IMR-90 (cell line): ENCODE measurements at regions of chr11 and their contacts with region 1.

Region 1: GRCh38 chr11:20477418-20478090 is 90.0 kb downstream of the PRMT3 start:
- DNase-seq: no peak
- ATAC-seq: 0 out of 2 replicates have a peak, but pooled peaks have one; percentile 27
- H3K4me3 ChIP-seq: no peak overlapping the region
- H3K27ac ChIP-seq: no peak overlapping the region
- H3K4me1 ChIP-seq: peaks cover 8% of the 10 kb centered on the region
- H3K27me3 ChIP-seq: no peaks in the 10 kb centered on the region
- CTCF ChIP-seq: no peak
- POLR2A ChIP-seq: no peak
- RAD21 ChIP-seq: no peak

Region 2: DNA sequence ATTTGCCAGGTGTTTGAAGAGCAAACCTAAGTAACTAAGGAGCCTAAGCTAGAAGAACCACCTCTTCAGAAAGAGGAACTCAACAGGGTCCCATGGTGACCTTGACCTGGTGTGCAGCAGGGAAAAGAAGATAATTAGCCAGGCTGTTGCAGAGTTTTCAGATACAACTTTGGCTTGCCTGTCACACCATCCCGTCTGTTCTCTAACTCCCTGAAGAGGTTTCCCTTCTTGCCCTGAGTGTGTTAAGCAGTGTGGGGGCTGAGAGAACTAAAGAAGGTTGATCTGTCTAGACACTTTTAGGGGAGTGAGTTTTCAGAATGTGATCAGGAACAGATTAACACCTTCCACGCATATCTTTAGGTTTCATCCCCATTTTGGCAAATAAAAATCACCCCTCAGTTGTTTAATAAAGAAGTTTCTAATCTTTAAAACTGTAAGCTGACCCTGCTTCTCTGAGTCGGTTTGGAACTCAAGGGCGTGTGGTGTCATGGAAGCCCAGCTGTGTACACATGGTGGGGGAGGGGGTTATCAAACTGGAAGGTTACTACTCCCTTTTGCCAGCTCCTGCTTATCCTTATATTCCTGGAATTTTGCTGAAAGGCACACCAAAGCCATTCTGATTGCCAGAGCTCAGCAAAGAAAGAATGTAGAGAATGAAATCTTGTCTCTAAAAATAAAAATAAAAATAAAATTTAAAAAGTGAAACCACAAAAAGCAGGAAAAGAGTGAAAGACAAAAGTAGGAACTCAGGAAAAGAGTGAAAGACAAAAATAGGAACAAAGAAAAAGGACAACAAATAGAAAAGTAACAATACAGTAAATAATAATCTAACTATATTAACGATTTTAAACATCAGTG is 387.5 kb before region 1 on chr11:
- CTCF ChIA-PET with region 1: no interaction called
- POLR2A ChIA-PET with region 1: no interaction called
- dilution Hi-C with region 1: no loop called
- in situ Hi-C with region 1: no loop called
- intact Hi-C with region 1: no loop called
- DNase-seq: peak; percentile 71
- ATAC-seq: peak; percentile 65
- H3K4me3 ChIP-seq: no peak overlapping the region
- H3K27ac ChIP-seq: peak overlapping the region; percentile 13; the same call in 1 of the 2 replicates
- H3K4me1 ChIP-seq: peaks cover 9% of the 10 kb centered on the region
- H3K27me3 ChIP-seq: no peaks in the 10 kb centered on the region
- CTCF ChIP-seq: no peak
- POLR2A ChIP-seq: no peak
- RAD21 ChIP-seq: no peak

Region 3: DNA sequence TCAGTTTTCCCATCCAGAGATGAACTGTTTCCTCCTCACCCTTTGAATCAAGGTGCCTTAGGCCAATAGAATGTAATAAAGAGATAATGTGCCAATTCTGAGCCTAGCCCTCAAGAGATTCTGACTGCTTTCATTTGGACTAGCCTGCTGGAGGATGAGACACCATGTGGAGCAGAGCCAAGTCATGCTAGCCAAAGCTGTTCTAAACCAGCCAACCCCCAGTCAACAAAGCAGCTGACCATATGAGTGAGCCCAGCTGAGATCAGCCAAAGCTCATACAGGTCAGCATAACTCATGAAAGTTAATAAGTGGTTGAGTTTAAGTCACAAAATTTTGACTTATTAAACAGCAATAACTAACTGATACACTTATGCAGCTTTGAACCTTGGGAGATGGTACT is 250.6 kb before region 1 on chr11:
- CTCF ChIA-PET with region 1: no interaction called
- POLR2A ChIA-PET with region 1: no interaction called
- dilution Hi-C with region 1: no loop called
- in situ Hi-C with region 1: no loop called
- intact Hi-C with region 1: no loop called
- DNase-seq: peak; percentile 28
- ATAC-seq: no peak
- H3K4me3 ChIP-seq: no peak overlapping the region
- H3K27ac ChIP-seq: no peak overlapping the region
- H3K4me1 ChIP-seq: no peaks in the 10 kb centered on the region
- H3K27me3 ChIP-seq: no peaks in the 10 kb centered on the region; the same call in 1 of the 2 replicates
- CTCF ChIP-seq: no peak
- POLR2A ChIP-seq: no peak
- RAD21 ChIP-seq: no peak

Region 4: DNA sequence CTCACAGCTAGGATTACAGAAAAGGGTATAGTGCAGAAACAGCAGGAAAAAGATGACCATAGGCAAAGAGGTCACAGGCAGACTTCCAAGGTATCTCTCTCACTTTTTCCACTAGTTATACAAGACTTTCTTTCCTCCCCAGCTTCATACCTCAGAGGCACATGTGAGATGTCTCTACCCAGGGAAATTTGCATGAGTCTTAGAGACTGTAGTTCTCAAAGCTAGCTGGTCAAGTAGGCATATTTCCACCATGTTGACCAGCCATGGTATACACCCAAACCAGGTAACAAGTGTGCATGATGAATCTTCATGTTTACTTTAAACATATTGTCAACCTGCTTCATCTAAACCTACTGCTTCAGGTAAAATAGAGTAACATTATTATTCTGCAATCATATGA is 62.1 kb before region 1 on chr11:
- CTCF ChIA-PET with region 1: interaction called, 11 read pairs
- POLR2A ChIA-PET with region 1: no interaction called
- dilution Hi-C with region 1: no loop called
- in situ Hi-C with region 1: no loop called
- intact Hi-C with region 1: no loop called
- DNase-seq: no peak
- ATAC-seq: no peak
- H3K4me3 ChIP-seq: no peak overlapping the region
- H3K27ac ChIP-seq: no peak overlapping the region
- H3K4me1 ChIP-seq: no peaks in the 10 kb centered on the region
- H3K27me3 ChIP-seq: no peaks in the 10 kb centered on the region
- CTCF ChIP-seq: no peak
- POLR2A ChIP-seq: no peak
- RAD21 ChIP-seq: no peak